Right ventricle myocardium inferior (tissue), 1 donor: ENCODE measurements at regions of chr2 and their contacts with region 1.

Region 1: DNA sequence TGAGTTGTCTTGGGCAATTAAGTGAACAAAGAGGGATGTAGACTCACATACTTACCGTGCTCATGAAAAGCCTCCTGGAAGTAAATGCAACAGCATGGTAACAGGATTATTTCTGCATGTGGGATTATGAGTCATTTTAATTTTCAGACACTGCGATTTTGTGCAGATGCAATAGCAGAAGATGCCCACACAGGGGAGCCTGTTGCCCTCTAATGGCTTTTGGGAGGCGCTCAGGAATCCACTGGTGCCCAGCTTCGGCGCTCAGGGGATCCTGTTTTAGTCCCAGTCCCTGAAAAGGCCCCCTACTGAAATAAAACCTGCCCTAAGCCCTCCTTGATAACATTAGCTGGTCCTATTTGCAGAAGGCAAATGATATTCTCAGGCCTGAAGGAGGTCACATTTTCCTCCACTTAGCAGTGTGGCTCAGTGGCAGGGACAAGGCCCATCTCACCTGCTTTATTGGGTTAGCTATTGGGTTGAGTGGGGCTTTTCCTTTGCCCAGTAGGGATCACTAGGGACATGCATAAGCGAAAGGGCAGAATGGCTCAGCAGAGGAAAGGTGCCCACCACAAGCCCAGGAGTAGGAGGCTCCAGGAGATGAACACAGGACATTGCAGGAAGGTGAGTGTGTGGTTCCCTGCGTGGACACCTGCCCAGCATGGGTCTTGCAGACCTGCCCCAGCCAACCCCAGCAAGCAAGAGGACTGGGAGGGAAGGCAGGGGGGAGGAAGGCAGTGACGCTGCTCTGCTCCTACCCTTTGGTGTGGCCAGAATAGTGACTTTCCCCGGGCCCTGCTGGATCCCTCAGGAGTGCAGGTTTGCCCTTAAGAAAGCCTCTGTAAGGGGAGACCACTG is 26.5 kb upstream of the KCNS3 start:
- DNase-seq: no peak
- ATAC-seq: peak; percentile 82

Region 2: GRCh38 chr2:17934721-17935120 is 82.8 kb after region 1 on chr2:
- intact Hi-C with region 1: no loop called
- DNase-seq: no peak
- ATAC-seq: no peak

Region 3: GRCh38 chr2:18149645-18150246 is 297.8 kb after region 1 on chr2:
- intact Hi-C with region 1: loop called (anchors 1 kb)
- DNase-seq: no peak
- ATAC-seq: no peak

Region 4: GRCh38 chr2:18378020-18378653 is 526.2 kb after region 1 on chr2:
- intact Hi-C with region 1: loop called (anchors 1 kb)
- DNase-seq: no peak
- ATAC-seq: peak; percentile 42

Region 5: GRCh38 chr2:18690342-18690741 is 838.4 kb after region 1 on chr2:
- intact Hi-C with region 1: no loop called
- DNase-seq: no peak
- ATAC-seq: no peak